ENCODE measurements at regions of chr6 and their contacts with region 1.

Region 1: DNA sequence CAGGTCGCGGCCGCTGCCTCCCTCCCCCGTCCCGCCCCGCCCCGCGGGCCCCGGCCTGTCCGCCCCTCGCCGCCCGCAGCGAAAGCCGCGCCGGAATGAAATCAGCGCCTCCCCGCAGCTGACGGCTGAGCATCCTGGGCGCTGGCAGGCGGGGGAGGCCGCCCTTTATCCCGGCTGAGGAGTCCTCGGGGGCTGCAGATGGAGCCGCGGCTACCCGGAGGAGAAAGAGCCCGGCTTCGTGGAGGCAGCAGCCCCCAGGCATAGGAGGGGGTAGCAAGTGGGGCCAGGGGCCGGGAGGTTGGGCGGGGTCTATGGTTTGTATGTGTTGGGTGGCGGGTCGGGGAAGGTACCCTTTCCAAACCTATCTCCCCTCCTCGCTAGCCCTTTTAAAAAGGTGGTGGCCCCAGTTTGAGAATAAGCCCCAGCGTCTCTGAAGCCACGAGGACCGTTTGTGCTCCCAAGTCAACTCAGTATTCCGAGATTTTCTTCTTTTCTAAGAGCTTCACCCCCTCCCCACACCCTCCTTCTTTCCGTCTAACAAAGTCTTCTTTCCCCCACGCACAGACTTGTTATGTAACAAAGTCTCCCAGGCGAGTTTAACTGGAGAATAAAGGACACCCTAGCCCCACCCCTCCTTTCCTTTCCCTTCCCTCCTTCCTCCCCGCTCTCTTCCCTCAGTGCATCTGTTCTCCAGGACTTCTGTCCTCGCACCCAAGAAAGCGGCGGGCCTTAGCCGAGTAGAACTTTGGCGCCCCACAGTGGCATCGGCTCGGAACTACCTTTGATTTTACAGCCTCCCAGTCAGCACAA is 11.0 kb downstream of the POU3F2 start:
- DNase-seq: peak; percentile 60
- ATAC-seq: peak; percentile 77
- H3K4me3 Mint-ChIP-seq: peak overlapping the region; percentile 74
- H3K27ac Mint-ChIP-seq: no peak overlapping the region
- H3K4me1 Mint-ChIP-seq: peaks cover 30% of the 10 kb centered on the region
- H3K27me3 Mint-ChIP-seq: peaks cover 78% of the 10 kb centered on the region
- CTCF ChIP-seq: peak; percentile 48

Region 2: GRCh38 chr6:97068211-97068610 is 1777.2 kb before region 1 on chr6:
- CTCF ChIA-PET with region 1: no interaction called
- POLR2A ChIA-PET with region 1: no interaction called
- intact Hi-C with region 1: loop called (anchors 1 kb)
- DNase-seq: no peak
- ATAC-seq: no peak
- H3K4me3 Mint-ChIP-seq: no peak overlapping the region
- H3K27ac Mint-ChIP-seq: no peak overlapping the region
- H3K4me1 Mint-ChIP-seq: no peaks in the 10 kb centered on the region
- H3K27me3 Mint-ChIP-seq: peaks cover 3% of the 10 kb centered on the region
- CTCF ChIP-seq: no peak

Region 3: DNA sequence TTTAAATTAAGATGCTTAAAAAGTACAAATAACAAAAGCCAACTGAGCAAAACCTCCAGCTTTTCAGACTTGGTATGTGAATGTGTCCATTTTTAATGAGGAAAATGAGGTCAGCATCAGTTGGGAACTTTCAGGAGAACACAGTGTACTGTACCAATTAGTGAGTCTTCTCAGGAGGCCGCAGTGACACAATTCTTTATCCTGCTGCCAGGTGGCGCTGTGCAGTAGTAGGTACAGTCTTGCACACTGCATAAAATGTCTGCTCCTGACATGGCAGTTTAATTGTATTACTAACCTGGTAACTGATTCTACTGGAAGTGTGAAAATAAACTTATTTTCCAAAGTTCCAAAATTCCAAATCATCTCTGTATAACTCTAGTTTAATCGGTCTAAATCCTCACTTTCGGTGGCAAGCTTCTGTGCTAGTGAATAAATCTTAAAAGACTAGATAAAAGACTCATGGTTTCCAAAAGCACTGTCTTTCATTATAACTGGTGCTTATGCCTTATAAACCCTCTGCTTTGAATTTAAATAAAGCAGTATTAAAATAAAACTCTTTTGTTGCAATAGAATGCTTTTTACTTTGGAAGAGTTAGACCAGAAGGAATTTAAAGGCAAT is 1347.6 kb before region 1 on chr6:
- CTCF ChIA-PET with region 1: interaction called, 5 read pairs
- POLR2A ChIA-PET with region 1: no interaction called
- intact Hi-C with region 1: loop called (anchors 1 kb)
- DNase-seq: peak; percentile 34
- ATAC-seq: peak; percentile 68
- H3K4me3 Mint-ChIP-seq: no peak overlapping the region
- H3K27ac Mint-ChIP-seq: no peak overlapping the region
- H3K4me1 Mint-ChIP-seq: no peaks in the 10 kb centered on the region
- H3K27me3 Mint-ChIP-seq: peaks cover 9% of the 10 kb centered on the region
- CTCF ChIP-seq: peak; percentile 91

Region 4: DNA sequence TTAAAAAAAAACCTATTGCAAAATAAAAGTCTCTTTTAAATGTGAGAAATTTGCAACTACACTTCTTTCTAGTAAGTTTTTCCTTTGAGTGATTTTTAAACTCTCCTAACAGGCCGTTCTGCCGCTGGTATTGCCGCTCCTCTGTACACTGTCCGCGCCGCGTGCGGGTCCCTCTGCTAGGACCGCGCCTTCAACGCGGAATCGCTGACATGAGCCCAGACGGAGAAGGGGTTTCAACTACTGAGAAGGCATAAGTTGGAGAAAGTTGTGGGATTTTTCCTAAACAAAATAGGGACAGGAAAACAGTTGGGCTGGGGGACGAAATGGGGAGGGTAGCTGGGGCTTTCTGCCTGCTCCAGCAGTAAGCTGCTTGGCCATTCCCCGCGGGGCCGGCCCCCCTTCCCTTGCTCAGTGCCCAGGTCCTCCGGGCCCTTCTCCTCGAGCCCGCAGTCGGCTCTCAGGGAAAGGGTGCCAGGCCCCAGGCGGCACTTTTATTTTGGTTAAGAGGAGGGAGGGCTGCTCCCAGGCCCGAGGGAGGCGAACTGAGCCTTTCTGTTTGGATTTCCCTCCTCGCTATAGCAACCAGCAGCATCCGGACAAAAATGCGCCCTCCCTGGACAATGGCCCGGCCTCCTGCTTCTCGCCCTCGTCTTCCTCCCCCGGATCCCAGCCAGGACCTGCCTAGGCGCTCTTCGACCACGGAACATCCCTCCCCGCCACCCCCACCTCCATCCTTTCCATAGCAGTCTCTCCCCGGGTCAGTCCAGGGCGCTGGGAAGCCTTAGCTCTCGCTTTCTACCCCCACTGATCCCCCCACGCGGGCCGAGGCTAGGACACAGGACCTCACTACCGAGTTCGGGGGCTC is 17.9 kb before region 1 on chr6:
- CTCF ChIA-PET with region 1: interaction called, 4 read pairs
- POLR2A ChIA-PET with region 1: no interaction called
- intact Hi-C with region 1: loop called (anchors 2 kb)
- DNase-seq: no peak
- ATAC-seq: no peak
- H3K4me3 Mint-ChIP-seq: no peak overlapping the region
- H3K27ac Mint-ChIP-seq: no peak overlapping the region
- H3K4me1 Mint-ChIP-seq: peaks cover 34% of the 10 kb centered on the region
- H3K27me3 Mint-ChIP-seq: peaks cover 73% of the 10 kb centered on the region
- CTCF ChIP-seq: no peak

Region 5: DNA sequence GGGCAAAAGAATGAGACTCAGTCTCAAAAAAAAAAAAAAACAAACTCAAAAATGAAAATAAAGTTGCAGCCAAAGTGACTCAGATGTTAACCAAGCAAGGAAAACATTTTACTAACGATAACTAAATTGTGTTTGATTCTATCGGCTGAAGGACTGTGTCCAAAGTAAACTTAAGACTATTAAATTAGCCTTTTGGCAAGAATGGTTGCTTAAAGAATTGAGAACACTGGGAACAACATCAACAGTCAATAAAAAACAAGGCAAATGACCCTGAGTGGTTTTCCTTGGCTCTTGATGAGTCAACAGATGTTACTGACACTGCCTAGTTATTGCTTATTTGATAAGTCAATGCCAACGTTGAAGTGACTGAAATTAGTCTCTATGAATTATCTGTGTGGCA is 25.6 kb after region 1 on chr6:
- CTCF ChIA-PET with region 1: no interaction called
- POLR2A ChIA-PET with region 1: no interaction called
- intact Hi-C with region 1: no loop called
- DNase-seq: no peak
- ATAC-seq: no peak
- H3K4me3 Mint-ChIP-seq: no peak overlapping the region
- H3K27ac Mint-ChIP-seq: no peak overlapping the region
- H3K4me1 Mint-ChIP-seq: no peaks in the 10 kb centered on the region
- H3K27me3 Mint-ChIP-seq: no peaks in the 10 kb centered on the region
- CTCF ChIP-seq: no peak

Region 6: DNA sequence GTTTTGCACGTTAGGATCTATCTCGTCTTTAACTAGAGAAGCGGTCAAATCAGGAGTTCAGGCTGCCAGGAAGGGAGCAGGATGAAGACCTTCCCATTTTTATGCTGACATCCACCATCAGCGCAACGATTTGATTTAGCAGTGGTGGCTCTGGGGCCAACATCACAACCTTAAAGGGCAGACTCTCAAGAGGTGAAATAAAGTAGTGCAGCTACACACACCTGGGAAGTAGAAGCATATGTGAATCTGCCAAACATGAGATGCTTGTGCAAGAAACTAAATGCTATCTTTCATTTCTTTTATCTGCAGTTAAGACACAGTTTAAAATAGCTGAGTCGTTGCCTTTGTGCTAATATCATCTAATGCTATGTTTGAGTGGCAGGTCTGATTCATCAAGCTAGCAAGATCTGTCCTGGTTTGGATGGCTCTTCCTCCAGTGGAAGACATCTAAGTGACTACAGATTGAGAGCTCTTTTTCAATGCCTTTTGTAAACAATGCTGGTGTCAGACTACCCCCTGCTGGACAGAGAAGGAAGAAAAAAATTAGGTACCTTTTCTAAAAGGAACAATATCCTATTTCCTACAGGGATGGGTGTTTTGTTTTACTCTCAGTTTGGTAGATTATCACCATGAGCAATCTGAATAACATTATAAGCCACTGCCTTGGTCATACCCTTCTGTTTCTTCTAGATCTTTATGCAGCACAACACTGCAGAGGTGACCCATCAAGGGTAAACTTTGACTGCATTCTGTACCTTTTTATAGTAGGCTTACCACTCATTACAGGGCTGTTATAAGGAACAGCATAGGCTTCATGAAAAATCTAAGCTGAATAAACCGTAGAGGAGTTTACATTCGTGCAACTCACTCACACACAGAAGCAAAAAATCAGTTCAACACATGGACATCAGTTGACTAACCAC is 274.0 kb after region 1 on chr6:
- CTCF ChIA-PET with region 1: no interaction called
- POLR2A ChIA-PET with region 1: no interaction called
- intact Hi-C with region 1: loop called (anchors 5 kb)
- DNase-seq: no peak
- ATAC-seq: no peak
- H3K4me3 Mint-ChIP-seq: no peak overlapping the region
- H3K27ac Mint-ChIP-seq: no peak overlapping the region
- H3K4me1 Mint-ChIP-seq: no peaks in the 10 kb centered on the region
- H3K27me3 Mint-ChIP-seq: peaks cover 15% of the 10 kb centered on the region
- CTCF ChIP-seq: no peak

Measured in activated B cell treated with CpG ODN at 0.5 μM for 24 hours (primary cell).